Heart right ventricle (tissue), 16 donors: ENCODE measurements at regions of chr19 and their contacts with region 1.

Region 1: DNA sequence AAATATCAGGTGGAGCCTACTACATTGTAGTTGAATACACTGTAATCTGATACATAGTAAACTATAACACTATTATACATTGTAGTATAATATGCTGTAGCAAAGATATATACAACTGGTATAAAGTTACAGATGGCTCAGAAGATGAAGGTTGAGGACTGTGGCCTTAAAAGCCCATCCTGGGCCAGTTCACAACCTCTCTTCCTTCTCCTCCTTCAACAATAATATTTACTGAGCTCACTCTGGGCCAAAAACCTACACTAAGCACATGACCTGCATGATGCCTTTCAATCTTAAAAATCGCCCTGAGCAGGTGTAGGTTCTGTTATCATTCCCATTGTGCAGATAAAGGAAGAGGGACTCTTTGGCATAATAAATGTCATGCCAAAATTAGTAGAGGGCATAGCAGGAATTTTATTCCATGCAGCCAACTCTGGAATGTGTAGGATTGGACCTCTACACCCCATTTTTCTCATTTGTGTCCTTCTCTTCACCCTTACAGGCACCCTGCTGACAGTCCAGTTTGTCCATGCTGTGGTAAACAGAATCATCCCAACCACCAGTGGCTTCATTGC is 14.6 kb upstream of the SIN3B start:
- DNase-seq: no peak
- ATAC-seq: no peak
- H3K4me3 ChIP-seq: no peak overlapping the region
- H3K27ac ChIP-seq: no peak overlapping the region
- H3K4me1 ChIP-seq: no peaks in the 10 kb centered on the region
- H3K27me3 ChIP-seq: no peaks in the 10 kb centered on the region
- CTCF ChIP-seq: no peak

Region 2: GRCh38 chr19:16763636-16764035 is 51.0 kb before region 1 on chr19:
- intact Hi-C with region 1: loop called in 1 of 10 experiments (anchors 2 kb)
- DNase-seq: no peak
- ATAC-seq: no peak
- H3K4me3 ChIP-seq: no peak overlapping the region
- H3K27ac ChIP-seq: no peak overlapping the region
- H3K4me1 ChIP-seq: peaks cover 0 to 3% (median 0%) of the 10 kb centered on the region in 9 donors
- H3K27me3 ChIP-seq: peaks cover 0 to 43% (median 13%) of the 10 kb centered on the region in 7 donors
- CTCF ChIP-seq: no peak

Region 3: DNA sequence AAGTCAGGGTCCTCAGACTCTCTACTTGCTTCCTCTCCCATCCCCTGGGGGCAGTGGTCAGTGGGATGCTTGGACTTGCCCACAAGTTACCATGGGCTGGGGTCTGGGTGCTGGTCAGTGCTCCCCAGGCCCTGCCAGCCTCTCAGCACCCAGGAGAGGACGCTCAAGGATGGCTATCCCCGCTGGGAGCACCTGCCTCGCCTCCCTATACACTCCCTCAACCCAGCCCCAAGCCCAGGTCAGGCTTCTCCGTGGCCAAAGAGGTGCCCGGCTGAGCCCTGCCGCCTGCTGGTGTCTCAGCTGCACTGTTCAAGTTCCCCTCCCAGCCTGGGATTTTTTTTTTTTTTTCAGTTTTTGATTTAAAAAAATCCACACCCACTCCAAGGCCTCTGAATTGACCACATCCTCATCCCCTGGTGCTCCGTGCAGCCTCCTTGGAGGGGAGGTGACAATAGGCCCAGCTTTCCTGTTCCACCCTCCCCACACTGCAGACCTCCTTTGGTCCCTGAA is 85.0 kb after region 1 on chr19:
- intact Hi-C with region 1: no loop called
- DNase-seq: no peak
- ATAC-seq: no peak
- H3K4me3 ChIP-seq: no peak overlapping the region
- H3K27ac ChIP-seq: no peak overlapping the region
- H3K4me1 ChIP-seq: peaks cover 0 to 25% (median 11%) of the 10 kb centered on the region in 9 donors
- H3K27me3 ChIP-seq: peaks cover 0 to 11% (median 0%) of the 10 kb centered on the region in 7 donors
- CTCF ChIP-seq: peak; percentile 29 to 60 (median 52)